A549 (cell line): ENCODE measurements at regions of chr9 and their contacts with region 1.

Region 1: GRCh38 chr9:38697776-38698300 is 22.1 kb downstream of the FAM240B start:
- DNase-seq: no peak
- ATAC-seq: no peak
- H3K4me3 ChIP-seq: no peak overlapping the region
- H3K27ac ChIP-seq: no peak overlapping the region
- H3K4me1 ChIP-seq: peaks cover 8% of the 10 kb centered on the region; the same call in 1 of the 3 replicates
- CTCF ChIP-seq: no peak
- EP300 ChIP-seq: no peak
- POLR2A ChIP-seq: no peak
- RAD21 ChIP-seq: no peak

Region 2: GRCh38 chr9:38380872-38381534 is 316.8 kb before region 1 on chr9:
- CTCF ChIA-PET with region 1: no interaction called
- POLR2A ChIA-PET with region 1: no interaction called
- DNase-seq: peak; percentile 27 to 60
- ATAC-seq: peak; percentile 78 to 80
- H3K4me3 ChIP-seq: no peak overlapping the region
- H3K27ac ChIP-seq: peak overlapping the region; percentile 69 to 80
- H3K4me1 ChIP-seq: peaks cover 23% of the 10 kb centered on the region
- CTCF ChIP-seq: no peak
- EP300 ChIP-seq: no peak
- POLR2A ChIP-seq: no peak
- RAD21 ChIP-seq: no peak

Region 3: DNA sequence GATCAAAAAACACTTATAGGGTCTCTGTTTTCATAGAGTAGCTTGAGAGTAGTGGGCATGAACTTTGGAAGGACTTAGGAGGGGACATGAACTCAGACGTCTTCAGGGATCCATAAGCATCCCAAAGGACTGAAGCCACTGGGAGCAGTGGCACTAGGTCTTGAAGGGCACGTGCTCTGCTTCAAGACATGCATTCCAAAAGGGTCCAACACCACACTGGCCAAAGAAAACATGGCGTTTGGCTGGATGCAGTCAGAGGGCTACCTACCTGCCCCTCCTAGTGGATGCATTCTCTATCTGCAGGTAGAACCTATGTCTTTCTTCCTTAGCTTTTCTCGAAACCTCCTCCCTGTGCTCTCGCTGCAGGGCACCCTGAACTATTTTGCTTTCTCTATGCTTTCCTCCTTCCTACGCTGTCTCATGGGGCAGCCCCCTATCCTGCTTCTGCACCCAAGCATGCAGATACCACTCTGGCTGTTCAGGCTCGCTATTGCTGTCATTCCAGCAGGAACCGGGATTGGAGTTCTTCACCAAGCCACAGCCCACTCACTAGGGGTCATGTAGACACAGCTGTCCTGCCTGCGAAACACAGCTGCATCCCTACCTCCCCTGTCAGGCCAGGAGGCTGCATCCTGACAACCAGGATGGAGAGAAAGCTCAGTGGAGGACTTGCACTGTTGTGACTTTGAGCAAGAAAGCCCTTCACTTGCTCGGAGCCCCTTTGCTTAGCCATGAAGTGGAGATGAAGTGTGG is 10.2 kb after region 1 on chr9:
- CTCF ChIA-PET with region 1: interaction called, 13 read pairs
- POLR2A ChIA-PET with region 1: no interaction called
- DNase-seq: peak in 1 of 2 experiments; percentile 57
- ATAC-seq: peak; percentile 71 to 90; a peak in 5 of 6 replicates
- H3K4me3 ChIP-seq: no peak overlapping the region
- H3K27ac ChIP-seq: no peak overlapping the region
- H3K4me1 ChIP-seq: peaks cover 5% of the 10 kb centered on the region; the same call in 2 of the 3 replicates
- CTCF ChIP-seq: peak; percentile 39
- EP300 ChIP-seq: no peak
- POLR2A ChIP-seq: no peak
- RAD21 ChIP-seq: peak; percentile 50 to 72; a peak in 4 of 5 replicates